ENCODE measurements at regions of chr6 and their contacts with region 1.

Region 1: GRCh38 chr6:28863604-28864320 is 60.0 kb downstream of the TRIM27 start:
- DNase-seq: peak; percentile 77
- ATAC-seq: peak; percentile 34
- H3K4me3 Mint-ChIP-seq: peak overlapping the region; percentile 92
- H3K27ac Mint-ChIP-seq: peak overlapping the region; percentile 88
- H3K4me1 Mint-ChIP-seq: peaks cover 39% of the 10 kb centered on the region
- H3K27me3 Mint-ChIP-seq: peaks cover 3% of the 10 kb centered on the region

Region 2: GRCh38 chr6:28188111-28188979 is 675.4 kb before region 1 on chr6:
- POLR2A ChIA-PET with region 1: no interaction called
- DNase-seq: no peak
- ATAC-seq: no peak
- H3K4me3 Mint-ChIP-seq: no peak overlapping the region
- H3K27ac Mint-ChIP-seq: no peak overlapping the region
- H3K4me1 Mint-ChIP-seq: no peaks in the 10 kb centered on the region
- H3K27me3 Mint-ChIP-seq: no peaks in the 10 kb centered on the region

Region 3: GRCh38 chr6:28729501-28730402 is 134.0 kb before region 1 on chr6:
- POLR2A ChIA-PET with region 1: no interaction called
- DNase-seq: no peak
- ATAC-seq: no peak
- H3K4me3 Mint-ChIP-seq: peak overlapping the region; percentile 88
- H3K27ac Mint-ChIP-seq: peak overlapping the region; percentile 84
- H3K4me1 Mint-ChIP-seq: peaks cover 9% of the 10 kb centered on the region
- H3K27me3 Mint-ChIP-seq: peaks cover 78% of the 10 kb centered on the region

Region 4: GRCh38 chr6:28807682-28808280 is 56.0 kb before region 1 on chr6:
- POLR2A ChIA-PET with region 1: no interaction called
- DNase-seq: no peak
- ATAC-seq: no peak
- H3K4me3 Mint-ChIP-seq: peak overlapping the region; percentile 32
- H3K27ac Mint-ChIP-seq: no peak overlapping the region
- H3K4me1 Mint-ChIP-seq: peaks cover 29% of the 10 kb centered on the region
- H3K27me3 Mint-ChIP-seq: peaks cover 88% of the 10 kb centered on the region

Region 5: DNA sequence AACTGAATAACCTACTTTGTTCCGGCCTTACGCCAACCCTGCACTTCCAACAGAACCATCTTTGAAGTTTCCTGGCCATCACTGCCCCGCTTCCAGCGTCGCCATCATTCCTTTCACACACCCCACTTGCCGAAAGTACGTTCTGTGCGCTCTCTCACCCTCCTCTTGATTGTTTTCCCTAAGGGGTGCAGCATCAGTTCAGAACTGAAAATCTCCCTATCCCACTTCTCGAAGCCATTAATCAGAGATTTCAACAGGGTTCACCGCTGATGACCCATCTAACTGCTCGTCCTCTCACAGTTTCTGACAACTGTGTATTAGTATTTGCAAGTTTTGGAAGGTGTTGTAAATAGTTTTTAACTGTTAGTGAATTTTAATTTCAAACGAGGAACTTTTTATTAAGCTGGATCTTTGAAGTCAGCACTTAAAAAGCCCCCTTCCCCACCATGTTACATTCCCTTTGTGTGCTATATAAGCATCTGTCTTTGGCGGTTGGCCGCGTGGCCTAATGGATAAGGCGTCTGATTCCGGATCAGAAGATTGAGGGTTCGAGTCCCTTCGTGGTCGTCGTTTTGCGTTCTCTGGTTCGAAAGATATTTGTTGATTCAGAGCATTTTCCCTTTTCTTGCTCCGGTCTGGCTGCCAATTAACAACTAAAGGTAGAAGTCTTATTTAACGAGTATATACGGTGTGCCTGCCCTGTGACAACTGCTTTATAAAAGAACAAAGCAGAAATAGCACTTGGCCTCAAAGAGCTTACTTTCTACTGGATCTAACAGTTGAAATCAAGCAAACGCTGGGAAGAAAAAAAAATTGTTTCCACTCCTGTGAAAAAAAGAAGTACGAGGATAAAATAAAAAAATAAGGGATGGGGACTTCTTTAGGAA is 17.4 kb after region 1 on chr6:
- POLR2A ChIA-PET with region 1: interaction called, 64 read pairs
- DNase-seq: peak; percentile 64
- ATAC-seq: no peak
- H3K4me3 Mint-ChIP-seq: peak overlapping the region; percentile 84
- H3K27ac Mint-ChIP-seq: peak overlapping the region; percentile 81
- H3K4me1 Mint-ChIP-seq: peaks cover 29% of the 10 kb centered on the region
- H3K27me3 Mint-ChIP-seq: peaks cover 20% of the 10 kb centered on the region

Region 6: GRCh38 chr6:29016559-29017427 is 153.0 kb after region 1 on chr6:
- POLR2A ChIA-PET with region 1: interaction called, 10 read pairs
- DNase-seq: peak; percentile 82
- ATAC-seq: peak; percentile 88
- H3K4me3 Mint-ChIP-seq: peak overlapping the region; percentile 89
- H3K27ac Mint-ChIP-seq: peak overlapping the region; percentile 88
- H3K4me1 Mint-ChIP-seq: peaks cover 14% of the 10 kb centered on the region
- H3K27me3 Mint-ChIP-seq: peaks cover 33% of the 10 kb centered on the region